ENCODE measurements at regions of chr11 and their contacts with region 1.

Region 1: GRCh38 chr11:68213555-68214174 is 569 bp upstream of the KMT5B start:
- DNase-seq: peak; percentile 87 to 90
- ATAC-seq: peak; percentile 59 to 80 (median 69)
- H3K4me3 ChIP-seq: peak overlapping the region; percentile 68 to 97 (median 81)
- H3K27ac ChIP-seq: peak overlapping the region; percentile 94 to 100 (median 100)
- H3K4me1 ChIP-seq: peaks cover 17 to 65% (median 49%) of the 10 kb centered on the region in 9 donors
- H3K27me3 ChIP-seq: no peaks in the 10 kb centered on the region
- CTCF ChIP-seq: peak in 3 of 9 donors; percentile 7 to 18 (median 9)

Region 2: DNA sequence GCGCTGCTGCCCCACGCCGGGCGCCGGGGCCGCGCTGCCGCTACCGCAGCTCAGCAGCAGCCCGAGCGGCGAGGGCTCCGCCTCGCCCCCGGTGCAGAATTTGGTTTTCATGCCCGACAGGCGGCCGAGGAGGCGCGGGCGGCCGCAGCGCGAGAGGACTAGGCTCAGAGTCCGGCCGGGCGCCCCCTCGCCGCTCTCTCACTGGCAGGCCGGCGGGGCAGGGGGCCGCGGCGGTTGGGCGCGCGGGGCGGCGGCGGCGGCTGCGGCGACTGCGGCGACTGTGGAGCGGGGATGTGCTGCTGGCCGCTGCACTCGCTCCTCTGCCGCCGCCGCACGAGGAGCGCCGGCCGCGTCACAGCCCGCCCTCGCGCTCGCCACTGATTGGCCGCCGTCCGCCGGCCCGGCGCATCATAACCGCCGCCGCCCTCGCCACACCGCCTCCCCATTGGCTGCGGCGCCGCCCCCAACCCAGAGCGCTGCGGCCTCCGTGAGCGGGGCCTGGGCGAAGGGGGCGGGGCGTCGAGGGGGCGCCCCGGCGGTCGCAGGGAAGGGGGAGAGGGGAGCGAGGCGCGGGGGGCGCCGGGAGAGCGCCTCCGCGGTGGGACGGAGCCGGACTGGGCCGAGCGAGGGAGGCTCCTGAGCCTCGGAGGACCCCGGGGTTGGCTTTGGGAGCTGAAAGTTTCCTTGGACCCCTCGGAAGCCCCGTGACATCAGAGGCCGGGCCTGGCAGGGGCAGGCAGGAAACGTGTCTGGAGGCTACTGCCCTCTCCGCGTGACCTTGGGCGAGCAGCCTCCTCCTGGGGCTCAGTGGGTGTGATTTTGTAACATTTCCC is 92.4 kb before region 1 on chr11 and contains the start of gene CHKA:
- intact Hi-C with region 1: loop called in 1 of 10 experiments (anchors 5 kb)
- DNase-seq: peak; percentile 91 to 95
- ATAC-seq: peak; percentile 93 to 97 (median 96)
- H3K4me3 ChIP-seq: peak within 1 kb of the TSS; percentile 31 to 90 (median 65)
- H3K27ac ChIP-seq: peak within 1 kb of the TSS; percentile 83 to 100 (median 98)
- H3K4me1 ChIP-seq: peaks cover 3 to 57% (median 40%) of the 10 kb centered on the region in 9 donors
- H3K27me3 ChIP-seq: no peaks in the 10 kb centered on the region
- CTCF ChIP-seq: peak in 1 of 9 donors; percentile 15
- total RNA-seq, gene CHKA: 7.0 to 11.8 (median 9.2) TPM

Measured in heart right ventricle (tissue), 16 donors.